ENCODE measurements at regions of chr1 and their contacts with region 1.

Region 1: DNA sequence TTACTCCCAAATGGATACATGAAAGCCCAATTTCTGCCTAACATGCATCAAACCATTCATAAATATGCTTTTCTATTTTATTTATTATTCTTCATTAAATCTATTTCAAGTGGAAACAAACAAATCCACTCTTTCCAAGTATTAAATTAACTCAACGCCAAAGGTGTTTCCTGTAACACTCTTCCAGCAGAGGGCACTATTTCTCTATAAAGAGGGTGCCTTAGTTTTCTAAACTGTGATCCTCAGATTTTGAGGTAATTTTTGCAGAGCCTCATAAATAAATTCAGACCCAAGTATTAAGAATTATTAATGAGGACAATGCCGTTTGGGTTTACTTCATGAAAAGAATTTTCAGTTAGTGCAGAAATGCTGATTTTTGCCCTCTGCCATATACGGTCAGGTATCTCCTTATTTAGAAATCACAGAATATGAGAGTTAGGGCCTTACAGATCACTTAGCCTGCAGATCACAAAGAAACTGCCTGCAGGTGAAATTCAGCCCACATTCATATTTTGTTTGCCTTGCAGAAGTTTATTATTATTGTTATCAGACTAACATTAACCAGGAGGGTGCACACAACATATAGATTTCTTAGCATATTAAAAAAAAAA is 40.1 kb upstream of the MYSM1 start:
- H3K4me3 Mint-ChIP-seq: no peak overlapping the region
- H3K27ac Mint-ChIP-seq: no peak overlapping the region
- H3K4me1 Mint-ChIP-seq: peaks cover 33% of the 10 kb centered on the region
- H3K27me3 Mint-ChIP-seq: no peaks in the 10 kb centered on the region

Region 2: GRCh38 chr1:58768971-58769808 is 29.2 kb after region 1 on chr1:
- intact Hi-C with region 1: loop called (anchors 2 kb)
- H3K4me3 Mint-ChIP-seq: no peak overlapping the region
- H3K27ac Mint-ChIP-seq: no peak overlapping the region
- H3K4me1 Mint-ChIP-seq: peaks cover 26% of the 10 kb centered on the region
- H3K27me3 Mint-ChIP-seq: peaks cover 2% of the 10 kb centered on the region

Region 3: GRCh38 chr1:59699227-59699847 is 959.4 kb after region 1 on chr1:
- intact Hi-C with region 1: loop called (anchors 2 kb)
- H3K4me3 Mint-ChIP-seq: no peak overlapping the region
- H3K27ac Mint-ChIP-seq: no peak overlapping the region
- H3K4me1 Mint-ChIP-seq: peaks cover 40% of the 10 kb centered on the region
- H3K27me3 Mint-ChIP-seq: no peaks in the 10 kb centered on the region

Region 4: GRCh38 chr1:59759156-59759925 is 1019.4 kb after region 1 on chr1:
- intact Hi-C with region 1: loop called (anchors 1 kb)
- H3K4me3 Mint-ChIP-seq: peak overlapping the region; percentile 61
- H3K27ac Mint-ChIP-seq: peak overlapping the region; percentile 42
- H3K4me1 Mint-ChIP-seq: peaks cover 16% of the 10 kb centered on the region
- H3K27me3 Mint-ChIP-seq: no peaks in the 10 kb centered on the region

Measured in dendritic cell treated with granulocyte-macrophage colony-stimulating factor and Interleukin-4, amounts not matched to agents 40 ng/mL and 50 ng/mL, for 4 days (primary cell).